Spleen (tissue), 13 donors: ENCODE measurements at regions of chr4 and their contacts with region 1.

Region 1: GRCh38 chr4:139099366-139099982 is 77.5 kb downstream of the ELF2 start:
- DNase-seq: no peak
- H3K4me3 ChIP-seq: no peak overlapping the region
- H3K27ac ChIP-seq: no peak overlapping the region
- H3K4me1 ChIP-seq: peaks cover 0 to 13% (median 2%) of the 10 kb centered on the region in 6 donors
- H3K27me3 ChIP-seq: no peaks in the 10 kb centered on the region
- CTCF ChIP-seq: peak; percentile 68 to 88 (median 83)
- POLR2A ChIP-seq: no peak

Region 2: GRCh38 chr4:139177868-139178611 is 78.6 kb after region 1 on chr4:
- intact Hi-C with region 1: loop called (anchors 10 kb)
- DNase-seq: peak; percentile 98
- H3K4me3 ChIP-seq: peak overlapping the region; percentile 72 to 97 (median 89)
- H3K27ac ChIP-seq: peak overlapping the region; percentile 95 to 100 (median 99)
- H3K4me1 ChIP-seq: peaks cover 13 to 43% (median 29%) of the 10 kb centered on the region in 6 donors
- H3K27me3 ChIP-seq: no peaks in the 10 kb centered on the region
- CTCF ChIP-seq: peak in 5 of 11 experiments; percentile 13 to 39 (median 27)
- POLR2A ChIP-seq: peak; percentile 58 to 94 (median 87)

Region 3: DNA sequence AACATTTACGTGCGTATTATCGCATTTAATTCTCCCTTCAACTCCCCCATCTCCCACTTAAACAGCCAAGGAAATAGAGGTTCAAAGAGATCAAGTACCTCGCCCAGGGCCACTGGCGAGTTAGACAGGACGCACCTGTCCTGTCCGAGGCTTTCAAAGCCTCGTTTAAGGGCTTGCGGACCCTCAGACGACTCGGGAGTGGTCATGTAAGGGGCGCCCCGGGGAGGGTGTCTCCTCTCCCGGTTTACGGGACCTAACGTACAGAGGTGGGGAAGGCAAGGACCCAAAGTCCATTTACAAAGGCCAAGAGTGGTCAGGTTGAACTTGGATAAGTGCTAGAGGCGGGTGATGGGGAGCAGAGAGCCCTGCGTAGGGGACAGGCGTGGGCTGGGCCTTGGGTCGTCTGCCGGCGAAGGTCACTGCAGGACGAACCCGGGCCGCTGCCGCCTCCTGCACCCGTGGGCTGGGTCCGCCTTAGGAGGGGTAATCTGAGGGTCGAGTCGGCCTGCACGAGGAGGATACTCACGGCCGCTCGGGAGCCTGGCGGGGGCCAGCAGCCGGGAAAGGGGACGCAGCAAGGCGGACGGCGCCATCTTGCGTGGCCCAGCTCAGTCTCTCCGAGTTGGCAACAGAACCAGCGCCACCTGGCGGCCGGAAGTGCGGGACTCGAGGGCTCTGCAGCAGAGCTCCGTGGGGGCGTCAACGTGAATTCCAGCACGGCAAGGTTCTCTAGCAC is 195.9 kb after region 1 on chr4:
- intact Hi-C with region 1: loop called (anchors 10 kb)
- DNase-seq: peak; percentile 100
- H3K4me3 ChIP-seq: peak overlapping the region; percentile 41 to 96 (median 80)
- H3K27ac ChIP-seq: peak overlapping the region; percentile 54 to 93 (median 89)
- H3K4me1 ChIP-seq: peaks cover 14 to 76% (median 42%) of the 10 kb centered on the region in 6 donors
- H3K27me3 ChIP-seq: no peaks in the 10 kb centered on the region
- CTCF ChIP-seq: peak; percentile 83 to 99 (median 97)
- POLR2A ChIP-seq: no peak